ENCODE measurements at regions of chr16 and their contacts with region 1.

Region 1: DNA sequence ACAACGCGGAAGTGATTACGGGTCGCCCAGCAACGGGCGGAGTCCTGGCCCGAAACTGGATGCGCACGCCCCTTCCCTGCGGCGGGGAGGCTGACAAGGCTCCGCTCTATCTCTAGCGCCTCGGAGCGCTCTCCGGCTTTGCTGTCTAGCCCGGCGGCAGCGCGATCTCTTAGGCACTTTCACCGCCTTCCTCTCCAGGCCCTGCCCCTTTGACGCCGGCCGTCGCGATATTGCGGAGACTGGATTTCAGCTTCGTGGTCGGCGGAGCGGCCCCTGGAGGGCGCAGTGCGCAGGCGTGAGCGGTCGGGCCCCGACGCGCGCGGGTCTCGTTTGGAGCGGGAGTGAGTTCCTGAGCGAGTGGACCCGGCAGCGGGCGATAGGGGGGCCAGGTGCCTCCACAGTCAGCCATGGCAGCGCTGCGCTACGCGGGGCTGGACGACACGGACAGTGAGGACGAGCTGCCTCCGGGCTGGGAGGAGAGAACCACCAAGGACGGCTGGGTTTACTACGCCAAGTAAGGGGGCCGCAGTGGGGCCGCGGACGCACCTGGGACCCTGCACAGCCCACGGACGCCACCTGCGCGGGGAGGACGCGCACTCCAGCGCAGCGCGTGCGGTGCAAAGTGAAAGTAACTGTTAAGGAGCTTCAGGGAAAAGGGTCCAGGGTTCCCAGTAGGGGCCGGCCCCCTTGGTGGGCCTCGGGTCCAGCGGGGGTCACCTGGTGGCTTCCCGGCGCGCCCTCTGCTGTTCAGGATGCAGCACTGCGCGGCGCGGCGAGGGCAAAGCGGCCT is at the start of gene WWOX:
- DNase-seq: peak; percentile 98
- H3K4me3 ChIP-seq: peak within 1 kb of the TSS; percentile 97
- H3K4me3 Mint-ChIP-seq: peak within 1 kb of the TSS; percentile 90
- H3K27ac Mint-ChIP-seq: peak within 1 kb of the TSS; percentile 91
- H3K4me1 ChIP-seq: no peaks in the 10 kb centered on the region
- H3K4me1 Mint-ChIP-seq: peaks cover 14% of the 10 kb centered on the region
- H3K27me3 ChIP-seq: no peaks in the 10 kb centered on the region
- H3K27me3 Mint-ChIP-seq: peaks cover 1% of the 10 kb centered on the region
- CTCF ChIP-seq: peak; percentile 97
- total RNA-seq, gene WWOX: 45.0 and 47.8 TPM in 2 replicates

Region 2: GRCh38 chr16:77668201-77668600 is 431.4 kb before region 1 on chr16:
- CTCF ChIA-PET with region 1: no interaction called
- POLR2A ChIA-PET with region 1: no interaction called
- intact Hi-C with region 1: no loop called
- DNase-seq: no peak
- H3K4me3 ChIP-seq: no peak overlapping the region
- H3K4me3 Mint-ChIP-seq: no peak overlapping the region
- H3K27ac Mint-ChIP-seq: no peak overlapping the region
- H3K4me1 ChIP-seq: no peaks in the 10 kb centered on the region
- H3K4me1 Mint-ChIP-seq: no peaks in the 10 kb centered on the region
- H3K27me3 ChIP-seq: no peaks in the 10 kb centered on the region
- H3K27me3 Mint-ChIP-seq: peaks cover 19% of the 10 kb centered on the region
- CTCF ChIP-seq: no peak

Region 3: DNA sequence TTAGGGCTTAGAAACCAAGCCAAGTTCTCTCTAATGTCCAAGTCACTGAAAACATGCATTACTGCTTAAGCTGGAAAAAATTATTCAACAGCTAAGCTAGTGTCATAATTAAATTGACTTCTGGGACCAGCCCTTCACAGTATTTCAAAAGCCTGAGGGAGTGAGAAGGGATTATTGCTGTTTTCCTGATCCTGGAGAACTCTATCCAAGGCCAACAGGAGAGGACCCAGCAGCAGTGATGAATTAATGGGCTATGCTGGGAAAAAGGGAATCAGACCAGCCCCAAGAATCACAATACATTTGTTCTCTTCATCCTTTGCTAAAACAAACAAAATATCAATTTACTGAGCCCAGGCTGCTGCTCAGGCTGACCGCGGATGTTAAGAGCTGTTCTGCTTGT is 111.8 kb before region 1 on chr16:
- CTCF ChIA-PET with region 1: no interaction called
- POLR2A ChIA-PET with region 1: no interaction called
- intact Hi-C with region 1: no loop called
- DNase-seq: no peak
- H3K4me3 ChIP-seq: no peak overlapping the region
- H3K4me3 Mint-ChIP-seq: no peak overlapping the region
- H3K27ac Mint-ChIP-seq: no peak overlapping the region
- H3K4me1 ChIP-seq: no peaks in the 10 kb centered on the region
- H3K4me1 Mint-ChIP-seq: no peaks in the 10 kb centered on the region
- H3K27me3 ChIP-seq: no peaks in the 10 kb centered on the region
- H3K27me3 Mint-ChIP-seq: peaks cover 18% of the 10 kb centered on the region
- CTCF ChIP-seq: no peak

Region 4: GRCh38 chr16:78045865-78046581 is 53.5 kb before region 1 on chr16:
- CTCF ChIA-PET with region 1: interaction called, 6 read pairs
- POLR2A ChIA-PET with region 1: interaction called, 3 read pairs
- intact Hi-C with region 1: loop called (anchors 1 kb)
- DNase-seq: peak; percentile 75 to 91
- H3K4me3 ChIP-seq: no peak overlapping the region
- H3K4me3 Mint-ChIP-seq: peak overlapping the region; percentile 58
- H3K27ac Mint-ChIP-seq: no peak overlapping the region
- H3K4me1 ChIP-seq: peaks cover 3% of the 10 kb centered on the region; the same call in 1 of the 2 replicates
- H3K4me1 Mint-ChIP-seq: peaks cover 8% of the 10 kb centered on the region
- H3K27me3 ChIP-seq: no peaks in the 10 kb centered on the region
- H3K27me3 Mint-ChIP-seq: peaks cover 3% of the 10 kb centered on the region
- CTCF ChIP-seq: peak in 1 of 2 experiments; percentile 23

Region 5: DNA sequence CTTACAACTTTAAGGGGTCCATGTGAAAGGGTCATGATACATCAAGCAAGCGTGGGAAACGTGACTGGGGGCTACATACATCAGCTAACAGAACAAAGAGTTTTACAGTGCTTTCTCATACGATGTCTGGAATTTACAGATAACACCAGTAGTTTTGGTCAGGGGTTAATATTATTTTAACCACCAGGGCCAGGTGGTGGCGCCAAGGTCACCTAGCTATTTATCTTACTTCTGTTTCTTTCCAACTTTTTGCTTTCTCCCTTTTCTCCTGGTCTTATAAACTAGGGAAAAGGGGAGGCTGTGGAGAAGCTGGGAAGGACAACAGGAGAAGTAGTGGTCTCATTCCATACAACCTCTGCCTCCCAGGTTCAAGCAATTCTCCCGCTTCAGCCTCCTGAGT is 39.3 kb before region 1 on chr16:
- CTCF ChIA-PET with region 1: interaction called, 12 read pairs
- POLR2A ChIA-PET with region 1: no interaction called
- intact Hi-C with region 1: loop called (anchors 1 kb)
- DNase-seq: peak in 1 of 2 experiments; percentile 25
- H3K4me3 ChIP-seq: no peak overlapping the region
- H3K4me3 Mint-ChIP-seq: peak overlapping the region; percentile 16
- H3K27ac Mint-ChIP-seq: peak overlapping the region; percentile 75
- H3K4me1 ChIP-seq: peaks cover 15% of the 10 kb centered on the region
- H3K4me1 Mint-ChIP-seq: peaks cover 25% of the 10 kb centered on the region
- H3K27me3 ChIP-seq: no peaks in the 10 kb centered on the region
- H3K27me3 Mint-ChIP-seq: no peaks in the 10 kb centered on the region
- CTCF ChIP-seq: peak; percentile 16 to 39

Measured in Caco-2 (cell line).